Activated T-helper 2 cell treated with anti-CD3 and anti-CD28 coated beads, Interferon-gamma antibody, Interleukin-2, Interleukin-4, amounts not matched to agents 10 μg/mL and 5 μg/mL and 100 μg/mL, durations not matched to agents 14 hours and 24 hours and 36 hours (primary cell): ENCODE measurements at regions of chr7 and their contacts with region 1.

Region 1: GRCh38 chr7:142711746-142712619 is 37.3 kb upstream of the PRSS1 start:
- DNase-seq: no peak
- H3K4me3 Mint-ChIP-seq: peak overlapping the region; percentile 72
- H3K27ac Mint-ChIP-seq: peak overlapping the region; percentile 72
- H3K4me1 Mint-ChIP-seq: peaks cover 51% of the 10 kb centered on the region
- H3K27me3 Mint-ChIP-seq: no peaks in the 10 kb centered on the region

Region 2: GRCh38 chr7:142632291-142633134 is 79.5 kb before region 1 on chr7:
- intact Hi-C with region 1: loop called (anchors 5 kb)
- DNase-seq: peak; percentile 33
- H3K4me3 Mint-ChIP-seq: no peak overlapping the region
- H3K27ac Mint-ChIP-seq: no peak overlapping the region
- H3K4me1 Mint-ChIP-seq: peaks cover 11% of the 10 kb centered on the region
- H3K27me3 Mint-ChIP-seq: peaks cover 16% of the 10 kb centered on the region

Region 3: DNA sequence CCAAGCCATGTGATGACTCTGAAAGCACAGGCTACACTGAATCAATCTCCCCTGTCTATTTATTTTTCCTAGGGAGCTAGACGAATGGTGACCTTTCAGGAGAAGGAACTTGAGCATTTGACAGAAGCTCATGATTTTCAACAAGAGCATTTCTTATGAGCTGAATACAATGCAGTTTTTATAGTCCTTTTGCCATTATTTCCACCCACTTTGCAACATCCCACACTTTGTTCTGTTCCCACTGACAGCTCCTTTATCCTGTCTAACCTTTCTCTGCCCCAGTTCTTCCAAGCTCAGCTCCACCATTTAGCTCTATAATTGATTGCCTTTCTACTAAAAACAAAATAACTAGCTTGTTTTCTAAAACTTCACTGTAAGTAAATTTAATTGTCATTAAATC is 54.6 kb before region 1 on chr7:
- intact Hi-C with region 1: no loop called
- DNase-seq: no peak
- H3K4me3 Mint-ChIP-seq: no peak overlapping the region
- H3K27ac Mint-ChIP-seq: no peak overlapping the region
- H3K4me1 Mint-ChIP-seq: no peaks in the 10 kb centered on the region
- H3K27me3 Mint-ChIP-seq: peaks cover 22% of the 10 kb centered on the region

Region 4: GRCh38 chr7:142669074-142669654 is 42.8 kb before region 1 on chr7:
- intact Hi-C with region 1: loop called (anchors 5 kb)
- DNase-seq: no peak
- H3K4me3 Mint-ChIP-seq: no peak overlapping the region
- H3K27ac Mint-ChIP-seq: no peak overlapping the region
- H3K4me1 Mint-ChIP-seq: peaks cover 26% of the 10 kb centered on the region
- H3K27me3 Mint-ChIP-seq: no peaks in the 10 kb centered on the region

Region 5: DNA sequence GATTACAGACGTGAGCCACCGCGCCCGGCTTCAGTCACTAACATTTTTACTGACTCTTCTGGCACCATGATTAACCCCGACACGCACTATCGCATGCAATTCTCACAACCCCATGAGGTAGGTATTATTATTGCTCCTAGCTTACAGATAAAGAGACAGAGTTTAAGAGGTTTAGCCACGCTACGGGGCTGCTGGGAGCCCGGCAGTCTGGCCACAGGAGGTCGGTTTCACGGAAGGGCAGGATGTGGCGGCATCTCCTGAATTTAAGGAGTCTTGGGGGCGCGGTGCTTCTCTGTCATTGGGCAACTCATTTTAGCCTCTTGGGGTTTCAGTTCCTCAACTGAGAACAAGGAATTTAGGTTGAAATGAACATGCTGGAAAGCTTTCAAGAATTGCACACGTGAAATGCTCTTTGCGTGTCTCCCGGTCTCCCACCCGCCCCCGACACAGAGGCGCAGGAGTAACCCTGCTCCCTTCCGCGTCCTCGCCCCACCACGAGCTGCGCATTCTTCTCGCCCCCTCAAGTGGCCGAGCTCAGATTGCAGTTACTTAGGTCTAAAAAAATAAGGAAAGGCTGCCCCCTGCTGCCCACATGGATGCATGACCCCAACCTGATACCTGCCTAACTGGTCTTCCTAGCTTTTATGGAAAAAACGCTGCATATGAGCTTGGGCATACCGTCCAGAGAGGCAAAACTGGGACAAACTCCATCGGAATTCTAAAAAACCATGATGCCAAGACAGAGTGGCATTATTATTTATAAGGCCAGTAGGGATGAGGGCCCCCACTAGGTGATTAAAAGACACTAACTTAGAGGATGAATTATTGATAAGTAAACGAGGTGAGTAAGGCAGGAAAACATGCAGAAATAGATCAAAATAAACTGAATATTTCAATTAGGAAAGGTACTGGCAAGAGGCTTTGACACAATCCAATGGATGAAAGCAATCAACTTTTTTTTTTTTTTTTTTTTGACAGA is 71.2 kb after region 1 on chr7:
- intact Hi-C with region 1: loop called (anchors 2 kb)
- DNase-seq: peak; percentile 65
- H3K4me3 Mint-ChIP-seq: peak overlapping the region; percentile 70
- H3K27ac Mint-ChIP-seq: peak overlapping the region; percentile 85
- H3K4me1 Mint-ChIP-seq: peaks cover 13% of the 10 kb centered on the region
- H3K27me3 Mint-ChIP-seq: no peaks in the 10 kb centered on the region

Region 6: DNA sequence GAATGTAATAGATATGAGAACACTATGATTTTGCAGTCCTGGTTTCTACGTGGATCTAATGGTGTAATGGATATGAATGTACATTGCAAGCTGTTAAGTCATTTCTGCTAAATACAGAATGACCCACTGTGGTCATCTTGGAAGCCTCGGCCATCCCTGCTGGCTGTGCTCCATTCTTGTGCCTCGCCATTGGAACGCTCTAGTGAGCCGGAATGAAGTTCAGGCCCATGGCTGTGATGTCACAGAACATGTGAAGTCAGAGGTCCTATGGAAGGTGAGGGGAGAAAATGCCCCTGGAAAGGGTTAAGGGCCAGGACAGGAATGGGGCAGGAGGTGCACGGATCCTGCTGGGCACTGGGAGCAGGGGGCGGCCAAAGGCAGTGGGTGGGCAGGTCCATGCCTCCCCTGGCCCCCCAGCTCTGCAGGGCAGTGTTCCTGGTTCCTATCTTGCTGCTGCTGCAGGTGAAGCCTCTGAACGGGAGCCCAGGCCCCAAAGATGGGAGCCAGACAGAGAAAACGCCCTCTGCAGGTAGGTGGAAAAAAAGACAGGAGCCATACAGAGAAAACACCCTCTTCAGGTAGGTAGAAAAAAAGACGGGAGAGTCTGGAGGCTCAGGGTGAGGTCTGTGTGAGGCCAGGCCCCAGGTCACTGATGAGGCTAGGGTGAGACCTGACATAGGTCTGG is 227.4 kb after region 1 on chr7 and contains the start of gene LLCFC1:
- intact Hi-C with region 1: no loop called
- DNase-seq: no peak
- H3K4me3 Mint-ChIP-seq: no peak within 1 kb of the TSS
- H3K27ac Mint-ChIP-seq: no peak within 1 kb of the TSS
- H3K4me1 Mint-ChIP-seq: no peaks in the 10 kb centered on the region
- H3K27me3 Mint-ChIP-seq: no peaks in the 10 kb centered on the region
- total RNA-seq, gene LLCFC1: not detected in 2 replicates

Region 7: DNA sequence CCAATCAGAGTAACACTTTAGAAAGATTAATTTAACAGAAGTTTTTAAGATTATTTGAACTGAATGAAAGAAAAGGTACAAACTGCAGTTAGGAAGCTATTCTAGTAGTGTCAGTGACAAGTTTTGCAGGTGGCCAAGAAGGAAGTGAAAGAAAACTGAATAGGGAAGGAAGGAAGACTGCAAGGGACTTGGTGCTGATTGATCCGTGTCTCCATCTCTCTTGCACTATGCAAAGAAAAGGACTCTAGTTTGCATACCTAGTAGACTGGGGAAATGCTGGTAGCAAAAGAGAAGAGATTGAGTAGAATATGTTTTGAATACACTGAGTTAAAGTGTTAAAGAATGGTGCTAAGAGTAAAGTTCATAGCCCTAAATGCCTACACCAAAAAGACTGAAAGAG is 373.1 kb after region 1 on chr7:
- intact Hi-C with region 1: no loop called
- DNase-seq: no peak
- H3K4me3 Mint-ChIP-seq: no peak overlapping the region
- H3K27ac Mint-ChIP-seq: no peak overlapping the region
- H3K4me1 Mint-ChIP-seq: no peaks in the 10 kb centered on the region
- H3K27me3 Mint-ChIP-seq: peaks cover 6% of the 10 kb centered on the region

Region 8: DNA sequence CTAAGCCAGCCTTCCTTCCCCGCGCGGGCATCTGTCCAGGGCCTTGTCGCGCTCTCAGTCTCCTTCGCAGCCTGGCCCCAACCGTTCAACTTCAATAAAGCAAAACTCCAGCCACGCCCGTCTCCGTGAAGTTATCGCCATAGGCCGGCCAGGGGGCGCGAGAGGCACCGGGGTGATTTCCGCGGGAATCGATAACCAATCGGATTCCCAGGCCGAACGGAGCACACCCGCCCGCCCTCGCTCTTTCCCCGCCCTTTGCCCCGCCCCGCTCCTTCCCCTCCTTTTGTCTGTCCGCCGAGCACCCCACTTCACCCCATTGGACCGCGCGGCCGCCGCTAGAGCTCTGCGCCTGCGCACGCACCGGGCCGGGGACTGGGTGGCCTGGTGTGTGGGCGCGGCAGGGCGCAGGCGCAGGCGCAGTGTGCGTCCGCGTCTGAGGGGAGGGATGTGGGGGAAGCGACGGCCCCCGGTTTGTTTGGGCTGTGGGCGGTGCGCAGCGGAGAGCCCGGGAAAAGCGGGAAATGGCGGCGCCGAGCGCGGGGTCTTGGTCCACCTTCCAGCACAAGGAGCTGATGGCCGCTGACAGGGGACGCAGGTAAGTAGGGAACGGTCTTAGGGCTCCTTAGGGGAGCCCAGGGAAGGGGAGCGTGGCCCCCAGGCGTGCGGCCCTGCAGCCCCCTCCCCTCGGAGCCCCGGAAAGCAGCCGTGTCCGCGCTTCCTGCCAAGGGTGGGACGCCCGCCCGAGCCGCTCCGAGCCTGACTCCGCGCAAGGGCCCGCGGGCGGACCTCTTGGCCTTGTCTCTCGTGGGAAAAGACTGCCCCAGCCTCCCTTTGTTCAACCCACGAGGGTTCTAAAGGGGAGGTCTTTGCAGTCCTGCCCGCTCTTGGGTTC is 576.2 kb after region 1 on chr7 and contains the start of gene CASP2:
- intact Hi-C with region 1: loop called (anchors 10 kb)
- DNase-seq: peak; percentile 99
- H3K4me3 Mint-ChIP-seq: peak within 1 kb of the TSS; percentile 95
- H3K27ac Mint-ChIP-seq: peak within 1 kb of the TSS; percentile 87
- H3K4me1 Mint-ChIP-seq: peaks cover 47% of the 10 kb centered on the region
- H3K27me3 Mint-ChIP-seq: no peaks in the 10 kb centered on the region
- total RNA-seq, gene CASP2: 116 and 122 TPM in 2 replicates